ENCODE measurements at regions of chr3 and their contacts with region 1.

Region 1: GRCh38 chr3:37324850-37325321 is 150.5 kb upstream of the LRRFIP2 start:
- DNase-seq: no peak
- ATAC-seq: no peak
- H3K4me3 ChIP-seq: no peak overlapping the region
- H3K4me3 Mint-ChIP-seq: peak overlapping the region in 1 of 3 donors; percentile 1
- H3K27ac ChIP-seq: no peak overlapping the region
- H3K27ac Mint-ChIP-seq: no peak overlapping the region
- H3K4me1 ChIP-seq: no peaks in the 10 kb centered on the region
- H3K4me1 Mint-ChIP-seq: peaks cover 5 to 12% (median 8%) of the 10 kb centered on the region in 3 donors
- H3K27me3 ChIP-seq: no peaks in the 10 kb centered on the region
- H3K27me3 Mint-ChIP-seq: no peaks in the 10 kb centered on the region

Region 2: GRCh38 chr3:37129871-37130270 is 195.0 kb before region 1 on chr3:
- CTCF ChIA-PET with region 1: no interaction called
- POLR2A ChIA-PET with region 1: interaction called in 1 of 2 experiments, 16 read pairs
- DNase-seq: no peak
- ATAC-seq: no peak
- H3K4me3 ChIP-seq: no peak overlapping the region
- H3K4me3 Mint-ChIP-seq: no peak overlapping the region
- H3K27ac ChIP-seq: no peak overlapping the region
- H3K27ac Mint-ChIP-seq: no peak overlapping the region
- H3K4me1 ChIP-seq: no peaks in the 10 kb centered on the region
- H3K4me1 Mint-ChIP-seq: peaks cover 7 to 18% (median 17%) of the 10 kb centered on the region in 3 donors
- H3K27me3 ChIP-seq: no peaks in the 10 kb centered on the region
- H3K27me3 Mint-ChIP-seq: no peaks in the 10 kb centered on the region

Region 3: GRCh38 chr3:37223141-37223558 is 101.7 kb before region 1 on chr3:
- CTCF ChIA-PET with region 1: no interaction called
- POLR2A ChIA-PET with region 1: no interaction called
- DNase-seq: no peak
- ATAC-seq: peak in 2 of 4 experiments; percentile 19 to 20
- H3K4me3 ChIP-seq: no peak overlapping the region
- H3K4me3 Mint-ChIP-seq: no peak overlapping the region
- H3K27ac ChIP-seq: no peak overlapping the region
- H3K27ac Mint-ChIP-seq: no peak overlapping the region
- H3K4me1 ChIP-seq: peaks cover 11 to 37% of the 10 kb centered on the region in 2 experiments
- H3K4me1 Mint-ChIP-seq: peaks cover 13 to 52% (median 32%) of the 10 kb centered on the region in 3 donors
- H3K27me3 ChIP-seq: no peaks in the 10 kb centered on the region
- H3K27me3 Mint-ChIP-seq: no peaks in the 10 kb centered on the region

Region 4: GRCh38 chr3:37372669-37373068 is 47.8 kb after region 1 on chr3:
- CTCF ChIA-PET with region 1: no interaction called
- POLR2A ChIA-PET with region 1: interaction called in 1 of 2 experiments, 18 read pairs
- DNase-seq: no peak
- ATAC-seq: no peak
- H3K4me3 ChIP-seq: no peak overlapping the region
- H3K4me3 Mint-ChIP-seq: no peak overlapping the region
- H3K27ac ChIP-seq: no peak overlapping the region
- H3K27ac Mint-ChIP-seq: no peak overlapping the region
- H3K4me1 ChIP-seq: no peaks in the 10 kb centered on the region
- H3K4me1 Mint-ChIP-seq: no peaks in the 10 kb centered on the region
- H3K27me3 ChIP-seq: no peaks in the 10 kb centered on the region
- H3K27me3 Mint-ChIP-seq: no peaks in the 10 kb centered on the region